ENCODE measurements at regions of chr2 and their contacts with region 1.

Region 1: DNA sequence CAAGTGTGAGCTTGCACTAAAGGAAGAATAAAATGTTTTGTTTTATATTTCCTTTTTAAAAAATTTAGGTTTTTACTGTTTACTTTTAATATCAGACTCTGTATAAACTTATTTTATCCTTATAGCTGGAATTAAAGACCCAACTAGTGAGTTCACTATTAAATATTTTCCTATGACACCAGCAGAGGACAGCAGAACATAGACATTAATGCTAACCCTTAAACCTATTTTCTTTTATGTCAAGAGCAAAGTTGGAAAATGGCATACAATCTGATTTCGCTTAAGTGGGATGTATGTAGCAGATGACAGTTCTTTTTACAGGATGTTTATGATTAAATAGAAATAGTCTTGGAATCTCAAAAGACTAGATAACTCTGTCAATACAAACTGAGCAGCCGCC is 188.2 kb upstream of the XIRP2 start:
- DNase-seq: peak in 2 of 9 donors; percentile 6 to 18
- ATAC-seq: no peak
- H3K4me3 ChIP-seq: no peak overlapping the region
- H3K4me3 Mint-ChIP-seq: no peak overlapping the region
- H3K27ac ChIP-seq: no peak overlapping the region
- H3K27ac Mint-ChIP-seq: no peak overlapping the region
- H3K4me1 ChIP-seq: no peaks in the 10 kb centered on the region
- H3K4me1 Mint-ChIP-seq: no peaks in the 10 kb centered on the region
- H3K27me3 ChIP-seq: no peaks in the 10 kb centered on the region
- H3K27me3 Mint-ChIP-seq: peaks cover 0 to 8% (median 0%) of the 10 kb centered on the region in 5 donors

Region 2: GRCh38 chr2:166825914-166826313 is 125.8 kb after region 1 on chr2:
- CTCF ChIA-PET with region 1: no interaction called
- POLR2A ChIA-PET with region 1: no interaction called
- intact Hi-C with region 1: loop called in 1 of 2 experiments (anchors 10 kb)
- DNase-seq: no peak
- ATAC-seq: no peak
- H3K4me3 ChIP-seq: no peak overlapping the region
- H3K4me3 Mint-ChIP-seq: no peak overlapping the region
- H3K27ac ChIP-seq: no peak overlapping the region
- H3K27ac Mint-ChIP-seq: peak overlapping the region in 2 of 9 donors; percentile 24 to 69
- H3K4me1 ChIP-seq: no peaks in the 10 kb centered on the region
- H3K4me1 Mint-ChIP-seq: no peaks in the 10 kb centered on the region
- H3K27me3 ChIP-seq: no peaks in the 10 kb centered on the region
- H3K27me3 Mint-ChIP-seq: no peaks in the 10 kb centered on the region

Region 3: DNA sequence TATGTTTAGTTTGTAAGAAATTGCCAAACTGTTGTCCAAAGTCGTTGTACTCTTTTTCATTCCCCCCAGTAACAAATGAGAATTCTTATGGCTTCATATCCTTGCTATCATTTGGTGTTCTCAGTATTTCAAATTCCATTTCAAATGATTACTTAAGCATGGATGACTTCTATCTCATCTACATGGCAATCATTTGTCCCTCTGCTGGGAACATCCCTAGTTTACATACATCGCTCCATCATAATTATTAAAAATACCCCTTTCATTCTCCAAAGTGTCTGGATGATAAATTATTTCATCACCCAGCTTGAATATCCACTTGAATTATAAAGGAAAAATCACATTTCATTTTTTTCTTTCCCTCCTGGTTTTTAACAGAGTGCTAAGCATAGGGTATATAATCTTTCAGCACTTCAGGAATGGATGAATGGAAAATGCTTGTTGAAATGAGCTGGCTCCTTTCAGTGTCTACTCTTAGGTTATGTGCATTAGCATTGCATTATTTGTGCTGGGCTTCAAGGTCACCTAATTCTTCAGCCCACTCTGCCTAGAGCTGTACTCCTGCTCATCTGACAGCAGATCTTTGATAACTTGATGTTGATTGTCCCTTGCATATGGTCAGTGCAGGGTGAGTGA is 221.3 kb after region 1 on chr2:
- CTCF ChIA-PET with region 1: no interaction called
- POLR2A ChIA-PET with region 1: no interaction called
- intact Hi-C with region 1: no loop called
- DNase-seq: no peak
- ATAC-seq: no peak
- H3K4me3 ChIP-seq: no peak overlapping the region
- H3K4me3 Mint-ChIP-seq: no peak overlapping the region
- H3K27ac ChIP-seq: no peak overlapping the region
- H3K27ac Mint-ChIP-seq: no peak overlapping the region
- H3K4me1 ChIP-seq: no peaks in the 10 kb centered on the region
- H3K4me1 Mint-ChIP-seq: no peaks in the 10 kb centered on the region
- H3K27me3 ChIP-seq: no peaks in the 10 kb centered on the region
- H3K27me3 Mint-ChIP-seq: no peaks in the 10 kb centered on the region

Region 4: GRCh38 chr2:166932032-166932431 is 232.0 kb after region 1 on chr2:
- CTCF ChIA-PET with region 1: no interaction called
- POLR2A ChIA-PET with region 1: no interaction called
- intact Hi-C with region 1: no loop called
- DNase-seq: no peak
- ATAC-seq: no peak
- H3K4me3 ChIP-seq: no peak overlapping the region
- H3K4me3 Mint-ChIP-seq: no peak overlapping the region
- H3K27ac ChIP-seq: no peak overlapping the region
- H3K27ac Mint-ChIP-seq: no peak overlapping the region
- H3K4me1 ChIP-seq: no peaks in the 10 kb centered on the region
- H3K4me1 Mint-ChIP-seq: no peaks in the 10 kb centered on the region
- H3K27me3 ChIP-seq: no peaks in the 10 kb centered on the region
- H3K27me3 Mint-ChIP-seq: no peaks in the 10 kb centered on the region

Region 5: DNA sequence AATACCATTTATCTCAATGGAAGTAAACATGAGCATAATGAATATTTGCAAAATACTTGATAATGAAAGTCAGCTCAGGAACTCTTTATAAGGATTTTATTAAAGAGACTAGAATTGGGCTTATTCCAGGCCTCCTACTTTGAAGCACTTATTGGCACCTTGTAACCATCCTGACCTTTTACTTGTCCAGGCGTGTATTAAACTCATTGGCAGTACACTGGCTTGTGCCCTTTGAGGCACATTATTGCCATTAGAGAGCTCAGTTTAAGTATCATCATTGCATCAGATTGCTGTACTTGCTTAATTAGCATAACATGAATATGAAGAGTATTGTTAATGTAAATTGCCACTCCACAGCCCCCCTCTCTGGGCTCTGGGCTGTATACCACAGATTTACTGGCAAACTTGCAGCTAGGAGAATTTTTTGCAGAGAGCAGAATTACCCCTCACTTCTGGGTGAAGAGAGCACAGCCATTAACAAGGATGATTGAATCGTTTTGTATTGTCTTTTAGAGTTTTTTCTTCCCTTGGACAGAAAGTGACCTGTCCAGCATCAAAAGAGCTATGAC is 260.7 kb after region 1 on chr2:
- CTCF ChIA-PET with region 1: no interaction called
- POLR2A ChIA-PET with region 1: no interaction called
- intact Hi-C with region 1: no loop called
- DNase-seq: no peak
- ATAC-seq: no peak
- H3K4me3 ChIP-seq: no peak overlapping the region
- H3K4me3 Mint-ChIP-seq: no peak overlapping the region
- H3K27ac ChIP-seq: no peak overlapping the region
- H3K27ac Mint-ChIP-seq: no peak overlapping the region
- H3K4me1 ChIP-seq: no peaks in the 10 kb centered on the region
- H3K4me1 Mint-ChIP-seq: peaks cover 0 to 9% (median 4%) of the 10 kb centered on the region in 7 donors
- H3K27me3 ChIP-seq: no peaks in the 10 kb centered on the region
- H3K27me3 Mint-ChIP-seq: peaks cover 0 to 9% (median 0%) of the 10 kb centered on the region in 5 donors